H1 (cell line): ENCODE measurements at regions of chr17 and their contacts with region 1.

Region 1: DNA sequence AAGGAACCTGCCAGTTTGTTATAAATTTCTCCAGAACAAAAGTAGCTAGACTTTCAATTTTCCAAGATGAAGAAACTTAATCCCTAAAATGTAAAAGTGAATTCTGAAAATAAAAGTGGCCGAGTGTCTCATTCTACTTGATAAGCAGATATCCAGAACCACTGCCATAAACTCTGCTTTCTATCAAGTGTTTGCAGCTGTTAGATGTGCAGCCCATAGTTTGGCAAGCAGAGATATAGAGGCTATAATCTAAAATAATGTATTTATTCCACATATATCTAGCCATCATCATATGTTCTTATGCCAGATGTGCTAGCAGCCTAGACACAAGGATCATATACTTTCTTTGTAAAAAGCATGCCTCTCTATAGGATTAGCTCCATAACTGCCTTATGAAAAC is 14.7 kb upstream of the FBXL20 start:
- DNase-seq: no peak
- H3K4me3 ChIP-seq: no peak overlapping the region
- H3K27ac ChIP-seq: no peak overlapping the region
- H3K4me1 ChIP-seq: no peaks in the 10 kb centered on the region
- H3K27me3 ChIP-seq: no peaks in the 10 kb centered on the region
- CTCF ChIP-seq: no peak
- EP300 ChIP-seq: no peak
- POLR2A ChIP-seq: no peak
- RAD21 ChIP-seq: no peak

Region 2: DNA sequence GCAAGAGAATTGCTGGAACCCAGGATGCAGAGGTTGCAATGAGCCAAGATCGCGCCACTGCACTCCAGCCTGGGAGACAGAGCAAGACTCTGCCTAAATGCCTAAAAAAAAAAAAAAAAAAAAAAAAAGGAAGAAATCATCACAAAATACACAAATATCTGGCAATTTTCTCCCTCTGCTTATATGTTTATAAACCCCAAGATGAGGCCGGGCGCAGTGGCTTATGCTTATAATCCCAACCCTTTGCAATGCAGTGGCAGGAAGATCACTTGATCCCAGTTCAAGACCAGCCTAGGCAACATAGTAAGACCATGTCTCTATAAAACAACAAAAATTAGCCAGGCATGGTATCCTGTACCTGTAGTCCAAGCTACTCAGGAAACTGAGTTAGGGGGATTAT is 13.5 kb after region 1 on chr17:
- CTCF ChIA-PET with region 1: no interaction called
- POLR2A ChIA-PET with region 1: interaction called, 10 read pairs
- DNase-seq: no peak
- H3K4me3 ChIP-seq: no peak overlapping the region
- H3K27ac ChIP-seq: no peak overlapping the region
- H3K4me1 ChIP-seq: no peaks in the 10 kb centered on the region
- H3K27me3 ChIP-seq: no peaks in the 10 kb centered on the region
- CTCF ChIP-seq: no peak
- EP300 ChIP-seq: no peak
- POLR2A ChIP-seq: no peak
- RAD21 ChIP-seq: no peak

Region 3: DNA sequence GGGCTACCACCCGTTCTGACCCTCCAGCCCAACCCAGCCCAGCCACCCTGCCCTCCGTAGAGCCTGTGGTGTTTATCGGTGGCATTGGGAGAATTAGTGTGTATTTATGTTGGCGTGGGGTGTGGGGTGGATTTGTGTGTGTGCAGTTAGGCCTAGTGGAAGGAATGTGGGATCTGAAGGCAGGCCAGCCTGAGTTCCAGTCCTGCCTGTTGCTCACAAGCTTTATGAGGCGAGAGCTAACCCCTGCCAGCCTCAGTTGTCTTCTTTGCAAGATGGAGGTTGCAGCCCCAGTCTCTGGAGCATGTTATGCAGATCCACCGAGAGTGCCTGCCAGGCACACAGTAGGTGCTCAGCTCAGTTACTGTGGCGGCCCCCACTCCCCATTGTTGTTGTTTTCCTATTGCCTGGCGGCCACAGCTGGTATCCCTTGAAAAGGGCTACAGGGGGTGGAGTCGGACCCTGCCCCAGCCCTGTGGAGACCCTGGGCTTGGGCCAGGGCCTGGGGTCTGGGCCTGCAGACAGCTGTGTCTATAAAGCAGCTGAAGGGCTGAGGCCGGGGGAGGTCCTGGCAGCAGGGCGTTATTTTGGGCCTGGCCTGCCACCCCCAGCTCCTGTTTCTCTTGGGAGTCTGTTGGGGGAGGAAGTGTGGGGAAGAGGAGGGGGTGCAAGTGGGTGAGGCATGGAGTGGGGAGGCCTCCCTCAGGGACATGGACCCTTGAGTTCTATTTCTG is 288.8 kb after region 1 on chr17:
- CTCF ChIA-PET with region 1: no interaction called
- POLR2A ChIA-PET with region 1: no interaction called
- DNase-seq: peak in 1 of 2 experiments; percentile 63
- H3K4me3 ChIP-seq: peak overlapping the region in 1 of 4 experiments; percentile 26; a peak in 4 of 8 replicates
- H3K27ac ChIP-seq: peak overlapping the region; percentile 72
- H3K4me1 ChIP-seq: peaks cover 12 to 43% (median 26%) of the 10 kb centered on the region in 4 experiments
- H3K27me3 ChIP-seq: no peaks in the 10 kb centered on the region
- CTCF ChIP-seq: peak in 1 of 3 experiments; percentile 10; a peak in 1 of 4 replicates
- EP300 ChIP-seq: peak in 1 of 2 experiments; percentile 52; a peak in 1 of 3 replicates
- POLR2A ChIP-seq: no peak
- RAD21 ChIP-seq: 0 out of 4 replicates have a peak, but pooled peaks of 1 of the 2 experiments have one; percentile 7